ENCODE measurements at regions of chr12 and their contacts with region 1.

Region 1: GRCh38 chr12:80195074-80195726 is 95.9 kb downstream of the OTOGL start:
- H3K4me3 ChIP-seq: no peak overlapping the region
- H3K27ac ChIP-seq: no peak overlapping the region
- H3K4me1 ChIP-seq: no peaks in the 10 kb centered on the region
- CTCF ChIP-seq: peak; percentile 64; the same call in 1 of the 2 replicates

Region 2: DNA sequence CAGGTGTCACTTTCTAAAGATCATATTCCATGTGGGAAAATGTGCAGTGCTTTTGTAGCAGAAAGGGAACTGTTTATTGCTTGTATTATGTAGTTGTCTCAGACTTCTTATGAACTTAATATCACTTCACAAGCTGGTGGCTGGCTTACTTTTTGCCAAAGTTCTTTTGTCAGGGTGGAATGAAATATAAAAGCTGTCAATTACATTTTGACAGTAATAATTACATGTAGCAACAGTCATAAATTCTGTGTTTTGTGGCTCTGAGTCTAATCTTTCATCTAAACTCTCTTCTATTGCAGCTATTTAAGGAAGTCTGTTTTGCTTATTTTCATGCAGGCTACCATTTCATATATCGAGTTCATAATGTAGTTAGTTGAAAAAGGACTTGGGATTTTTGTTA is 10.8 kb after region 1 on chr12:
- CTCF ChIA-PET with region 1: interaction called, 51 read pairs
- POLR2A ChIA-PET with region 1: no interaction called
- H3K4me3 ChIP-seq: no peak overlapping the region
- H3K27ac ChIP-seq: no peak overlapping the region
- H3K4me1 ChIP-seq: peaks cover 6% of the 10 kb centered on the region; the same call in 1 of the 2 replicates
- CTCF ChIP-seq: no peak

Region 3: DNA sequence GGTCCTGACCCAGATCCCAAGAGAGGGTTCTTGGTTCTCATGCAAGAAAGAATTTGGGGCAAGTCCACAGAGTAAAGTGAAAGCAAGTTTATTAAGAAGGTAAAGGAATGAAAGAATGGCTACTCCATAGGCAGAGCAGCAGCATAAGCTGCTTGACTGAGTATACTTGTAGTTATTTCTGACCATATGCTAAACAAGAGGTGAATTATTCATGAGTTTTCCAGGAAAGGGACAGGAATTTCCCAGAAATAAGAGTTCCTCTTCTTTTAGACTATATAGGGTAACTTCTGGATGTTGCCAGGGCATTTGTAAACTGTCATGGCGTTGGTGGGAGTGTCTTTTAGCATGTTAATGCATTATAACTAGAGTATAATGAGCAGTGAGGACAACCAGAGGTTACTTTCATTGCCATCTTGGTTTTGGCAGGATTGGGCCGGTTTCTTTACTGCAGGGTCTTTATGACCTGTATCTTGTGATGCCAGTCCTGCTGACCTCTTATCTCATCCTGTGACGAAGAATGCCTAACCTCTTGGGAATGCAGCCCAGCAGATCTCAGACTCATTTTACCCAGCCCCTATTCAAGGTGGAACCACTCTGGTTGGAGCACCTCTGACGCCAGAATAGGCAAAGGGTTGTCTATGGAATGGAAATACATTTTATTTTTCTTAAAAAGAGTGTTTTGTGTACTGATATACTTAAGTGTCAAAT is 17.9 kb after region 1 on chr12:
- CTCF ChIA-PET with region 1: interaction called, 10 read pairs
- POLR2A ChIA-PET with region 1: no interaction called
- H3K4me3 ChIP-seq: no peak overlapping the region
- H3K27ac ChIP-seq: no peak overlapping the region
- H3K4me1 ChIP-seq: 0 out of 2 replicates have a peak, but pooled peaks cover 2% of the 10 kb centered on the region
- CTCF ChIP-seq: no peak

Region 4: GRCh38 chr12:80230068-80230467 is 34.9 kb after region 1 on chr12:
- CTCF ChIA-PET with region 1: interaction called, 21 read pairs
- POLR2A ChIA-PET with region 1: no interaction called
- H3K4me3 ChIP-seq: no peak overlapping the region
- H3K27ac ChIP-seq: no peak overlapping the region
- H3K4me1 ChIP-seq: peaks cover 13% of the 10 kb centered on the region
- CTCF ChIP-seq: no peak

Region 5: GRCh38 chr12:80241576-80242273 is 46.5 kb after region 1 on chr12:
- CTCF ChIA-PET with region 1: interaction called, 11 read pairs
- POLR2A ChIA-PET with region 1: no interaction called
- H3K4me3 ChIP-seq: no peak overlapping the region
- H3K27ac ChIP-seq: no peak overlapping the region
- H3K4me1 ChIP-seq: no peaks in the 10 kb centered on the region
- CTCF ChIP-seq: no peak

Region 6: GRCh38 chr12:80277732-80278131 is 82.5 kb after region 1 on chr12:
- CTCF ChIA-PET with region 1: interaction called, 294 read pairs
- POLR2A ChIA-PET with region 1: no interaction called
- H3K4me3 ChIP-seq: no peak overlapping the region
- H3K27ac ChIP-seq: no peak overlapping the region
- H3K4me1 ChIP-seq: no peaks in the 10 kb centered on the region
- CTCF ChIP-seq: no peak

Region 7: DNA sequence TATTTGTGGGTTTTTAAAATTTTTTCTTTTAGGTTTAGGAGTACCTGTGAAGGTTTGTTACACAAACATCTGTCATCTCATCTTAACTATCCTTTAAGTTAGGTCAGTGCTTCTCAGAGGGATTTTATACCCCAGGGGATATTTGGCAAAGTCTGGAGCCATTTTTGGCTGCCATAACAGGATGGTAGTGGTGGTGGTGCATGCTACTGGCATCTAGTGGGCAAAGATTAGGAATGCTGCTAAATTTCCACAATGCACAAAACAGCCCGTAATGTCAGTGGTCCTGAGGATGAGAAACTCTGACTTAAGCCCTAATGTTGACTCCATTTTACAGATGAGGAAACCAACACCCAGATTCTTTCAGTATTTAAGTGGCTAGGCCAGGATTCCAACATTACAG is 427.1 kb after region 1 on chr12:
- CTCF ChIA-PET with region 1: no interaction called
- POLR2A ChIA-PET with region 1: no interaction called
- H3K4me3 ChIP-seq: no peak overlapping the region
- H3K27ac ChIP-seq: no peak overlapping the region
- H3K4me1 ChIP-seq: peaks cover 7% of the 10 kb centered on the region
- CTCF ChIP-seq: no peak

Region 8: DNA sequence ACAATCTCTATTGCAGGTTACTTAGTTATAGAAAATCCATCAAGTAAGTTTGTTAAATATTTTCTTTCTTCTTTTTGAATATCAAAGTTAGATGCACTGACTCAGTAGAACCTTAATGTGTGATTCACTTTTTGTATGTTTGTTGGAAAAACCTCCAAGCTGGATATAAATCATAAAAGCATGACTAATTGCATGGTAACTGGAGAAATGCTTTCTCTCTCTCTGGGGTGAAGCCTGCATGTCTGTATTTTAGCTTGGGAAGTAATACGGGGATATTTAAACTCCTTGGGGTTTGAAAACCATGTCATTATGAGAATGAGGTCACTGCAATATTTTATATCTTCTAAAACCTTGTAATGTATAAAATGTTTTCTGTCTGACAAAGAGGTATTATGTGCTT is 453.7 kb after region 1 on chr12:
- CTCF ChIA-PET with region 1: no interaction called
- POLR2A ChIA-PET with region 1: no interaction called
- H3K4me3 ChIP-seq: no peak overlapping the region
- H3K27ac ChIP-seq: no peak overlapping the region
- H3K4me1 ChIP-seq: no peaks in the 10 kb centered on the region
- CTCF ChIP-seq: no peak